CD8-positive, alpha-beta memory T cell (primary cell): ENCODE measurements at regions of chr15 and their contacts with region 1.

Region 1: GRCh38 chr15:35436422-35436821 is 109.5 kb downstream of the DPH6 start:
- DNase-seq: no peak
- H3K4me3 ChIP-seq: no peak overlapping the region
- H3K4me3 Mint-ChIP-seq: no peak overlapping the region
- H3K27ac ChIP-seq: no peak overlapping the region
- H3K27ac Mint-ChIP-seq: no peak overlapping the region
- H3K4me1 ChIP-seq: no peaks in the 10 kb centered on the region
- H3K4me1 Mint-ChIP-seq: no peaks in the 10 kb centered on the region
- H3K27me3 ChIP-seq: no peaks in the 10 kb centered on the region
- H3K27me3 Mint-ChIP-seq: peaks cover 0 to 2% of the 10 kb centered on the region in 2 donors

Region 2: DNA sequence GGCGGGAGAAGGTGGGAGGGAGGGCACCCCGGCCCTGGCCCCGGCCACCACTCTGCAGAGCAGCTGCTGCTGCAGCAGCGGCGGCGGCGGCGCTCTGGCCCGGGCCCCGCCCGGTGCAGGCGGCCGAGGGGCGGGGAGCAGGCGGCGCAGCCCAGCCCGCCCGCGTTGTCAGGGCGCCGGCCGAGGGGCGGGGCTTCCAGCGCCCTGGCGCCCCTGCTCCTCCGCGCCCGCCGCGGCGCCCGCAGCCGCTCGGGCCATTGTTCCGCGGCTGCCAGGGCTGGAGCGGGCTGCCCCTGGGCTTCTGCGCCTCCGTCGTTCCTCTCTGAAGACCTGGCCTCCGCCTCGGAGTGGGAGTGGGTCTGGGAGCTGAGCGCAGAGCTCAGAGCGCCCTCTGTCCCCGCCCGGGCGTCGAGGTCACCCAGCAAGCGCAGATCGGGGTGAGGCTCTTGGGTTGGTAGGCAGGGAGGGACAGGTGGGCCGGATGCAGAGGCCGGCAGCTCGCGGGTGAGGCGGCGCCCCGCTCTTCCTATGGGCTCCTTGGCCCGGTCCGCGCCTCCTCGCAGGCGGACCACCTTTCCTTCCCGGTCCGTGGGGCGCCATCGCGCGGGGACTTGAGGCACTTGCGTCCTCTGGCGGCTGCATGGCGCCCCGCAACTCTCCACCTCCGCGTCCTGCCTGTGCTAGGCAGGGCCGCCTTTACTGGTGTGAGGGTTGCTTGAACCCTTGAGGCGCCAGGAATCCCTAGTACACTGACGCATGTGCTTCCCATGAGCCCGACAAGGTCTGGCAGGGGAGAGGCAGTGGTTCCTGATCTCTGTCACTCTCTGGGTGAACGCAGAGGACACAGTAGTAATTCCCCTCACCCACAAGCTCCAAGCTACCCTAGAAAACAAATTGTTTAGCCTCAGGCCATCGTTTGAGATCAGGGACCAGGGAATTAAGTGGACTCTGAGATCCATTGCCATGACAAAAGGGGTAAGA is 1069.0 kb before region 1 on chr15 and contains the start of gene LPCAT4:
- CTCF ChIA-PET with region 1: no interaction called
- POLR2A ChIA-PET with region 1: no interaction called
- DNase-seq: peak; percentile 85 to 94 (median 90)
- H3K4me3 ChIP-seq: peak within 1 kb of the TSS; percentile 79
- H3K4me3 Mint-ChIP-seq: peak within 1 kb of the TSS; percentile 90 to 98 (median 95)
- H3K27ac ChIP-seq: peak within 1 kb of the TSS; percentile 75
- H3K27ac Mint-ChIP-seq: peak within 1 kb of the TSS; percentile 93 to 98 (median 96)
- H3K4me1 ChIP-seq: peaks cover 25% of the 10 kb centered on the region
- H3K4me1 Mint-ChIP-seq: peaks cover 31 to 51% (median 42%) of the 10 kb centered on the region in 3 donors
- H3K27me3 ChIP-seq: no peaks in the 10 kb centered on the region
- H3K27me3 Mint-ChIP-seq: no peaks in the 10 kb centered on the region
- total RNA-seq, gene LPCAT4: 49.5 to 57.4 TPM

Region 3: GRCh38 chr15:34837246-34838016 is 599.0 kb before region 1 on chr15:
- CTCF ChIA-PET with region 1: no interaction called
- POLR2A ChIA-PET with region 1: interaction called, 15 read pairs
- DNase-seq: no peak
- H3K4me3 ChIP-seq: no peak overlapping the region
- H3K4me3 Mint-ChIP-seq: no peak overlapping the region
- H3K27ac ChIP-seq: no peak overlapping the region
- H3K27ac Mint-ChIP-seq: no peak overlapping the region
- H3K4me1 ChIP-seq: no peaks in the 10 kb centered on the region
- H3K4me1 Mint-ChIP-seq: no peaks in the 10 kb centered on the region
- H3K27me3 ChIP-seq: no peaks in the 10 kb centered on the region
- H3K27me3 Mint-ChIP-seq: peaks cover 12 to 20% of the 10 kb centered on the region in 2 donors

Region 4: DNA sequence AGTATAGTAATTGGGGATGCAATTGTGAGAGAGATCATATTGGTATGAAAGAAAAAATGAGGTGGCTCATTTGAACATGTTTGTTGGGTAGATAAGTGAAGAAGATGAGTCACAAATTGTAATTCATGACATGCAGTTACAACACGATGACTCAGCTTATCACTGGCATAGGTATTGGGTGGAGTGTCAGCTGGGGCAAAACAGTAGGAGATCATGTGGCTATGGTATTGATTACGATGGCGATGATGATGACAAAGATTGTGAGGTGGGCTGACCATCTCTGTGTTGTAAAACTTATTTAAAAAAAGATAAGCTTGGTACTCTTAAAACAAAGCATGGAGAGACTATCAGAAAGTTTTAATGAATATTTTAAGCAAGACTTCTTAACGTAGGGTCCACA is 121.1 kb after region 1 on chr15:
- CTCF ChIA-PET with region 1: no interaction called
- POLR2A ChIA-PET with region 1: no interaction called
- DNase-seq: no peak
- H3K4me3 ChIP-seq: no peak overlapping the region
- H3K4me3 Mint-ChIP-seq: no peak overlapping the region
- H3K27ac ChIP-seq: no peak overlapping the region
- H3K27ac Mint-ChIP-seq: no peak overlapping the region
- H3K4me1 ChIP-seq: no peaks in the 10 kb centered on the region
- H3K4me1 Mint-ChIP-seq: no peaks in the 10 kb centered on the region
- H3K27me3 ChIP-seq: no peaks in the 10 kb centered on the region
- H3K27me3 Mint-ChIP-seq: peaks cover 0 to 2% of the 10 kb centered on the region in 2 donors